AG04449 (cell line): ENCODE measurements at regions of chr4 and their contacts with region 1.

Region 1: GRCh38 chr4:153643406-153644383 is 40.4 kb upstream of the TLR2 start:
- DNase-seq: no peak
- H3K4me3 ChIP-seq: no peak overlapping the region
- CTCF ChIP-seq: peak; percentile 46

Region 2: GRCh38 chr4:153620352-153620751 is 23.3 kb before region 1 on chr4:
- CTCF ChIA-PET with region 1: interaction called, 11 read pairs
- POLR2A ChIA-PET with region 1: no interaction called
- DNase-seq: peak; percentile 24
- H3K4me3 ChIP-seq: no peak overlapping the region
- CTCF ChIP-seq: no peak